Heart left ventricle (tissue), 16 donors: ENCODE measurements at regions of chr7 and their contacts with region 1.

Region 1: DNA sequence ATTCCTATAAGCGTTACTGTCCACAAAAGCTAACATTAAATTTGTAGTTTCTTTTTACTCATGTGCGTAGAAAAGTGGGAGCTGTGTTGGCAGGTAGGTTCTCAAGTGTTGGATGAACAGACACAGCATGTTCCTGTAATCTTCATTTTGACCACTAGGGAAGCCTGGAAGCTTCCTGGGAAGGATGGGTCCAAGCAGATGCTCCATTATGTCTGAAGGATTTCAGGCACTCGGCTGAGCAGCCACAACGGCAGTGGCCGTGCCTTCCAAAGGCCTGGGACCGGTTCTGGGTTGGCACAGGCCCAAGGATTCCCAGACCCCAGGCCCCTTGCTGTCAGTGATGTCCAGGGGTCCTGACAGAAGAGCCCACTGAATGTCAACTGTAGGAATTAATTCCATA is 386.3 kb downstream of the TNS3 start:
- DNase-seq: no peak
- ATAC-seq: no peak
- H3K4me3 ChIP-seq: no peak overlapping the region
- H3K27ac ChIP-seq: no peak overlapping the region
- H3K4me1 ChIP-seq: peaks cover 0 to 19% (median 4%) of the 10 kb centered on the region in 12 donors
- H3K27me3 ChIP-seq: no peaks in the 10 kb centered on the region
- CTCF ChIP-seq: peak in 3 of 12 donors; percentile 10 to 28 (median 26)
- POLR2A ChIP-seq: no peak

Region 2: GRCh38 chr7:47239931-47240421 is 44.3 kb after region 1 on chr7:
- intact Hi-C with region 1: loop called in 2 of 10 experiments (anchors 5 kb)
- DNase-seq: no peak
- ATAC-seq: no peak
- H3K4me3 ChIP-seq: no peak overlapping the region
- H3K27ac ChIP-seq: peak overlapping the region in 3 of 12 donors; percentile 20 to 33 (median 26)
- H3K4me1 ChIP-seq: peaks cover 0 to 18% (median 2%) of the 10 kb centered on the region in 12 donors
- H3K27me3 ChIP-seq: no peaks in the 10 kb centered on the region
- CTCF ChIP-seq: no peak
- POLR2A ChIP-seq: no peak

Region 3: GRCh38 chr7:47247132-47247531 is 51.5 kb after region 1 on chr7:
- intact Hi-C with region 1: loop called in 2 of 10 experiments (anchors 5 kb)
- DNase-seq: no peak
- ATAC-seq: peak in 1 of 4 donors; percentile 23
- H3K4me3 ChIP-seq: no peak overlapping the region
- H3K27ac ChIP-seq: no peak overlapping the region
- H3K4me1 ChIP-seq: peaks cover 0 to 7% (median 0%) of the 10 kb centered on the region in 12 donors
- H3K27me3 ChIP-seq: no peaks in the 10 kb centered on the region
- CTCF ChIP-seq: no peak
- POLR2A ChIP-seq: no peak